ENCODE measurements at regions of chr11 and their contacts with region 1.

Region 1: GRCh38 chr11:9265211-9266131 is at the start of gene DENND5A:
- DNase-seq: peak; percentile 62
- H3K4me3 Mint-ChIP-seq: peak within 1 kb of the TSS; percentile 84
- H3K27ac Mint-ChIP-seq: peak within 1 kb of the TSS; percentile 95
- H3K4me1 Mint-ChIP-seq: peaks cover 30% of the 10 kb centered on the region
- H3K27me3 Mint-ChIP-seq: peaks cover 3% of the 10 kb centered on the region
- total RNA-seq, gene DENND5A: 62.3 to 63.5 TPM

Region 2: DNA sequence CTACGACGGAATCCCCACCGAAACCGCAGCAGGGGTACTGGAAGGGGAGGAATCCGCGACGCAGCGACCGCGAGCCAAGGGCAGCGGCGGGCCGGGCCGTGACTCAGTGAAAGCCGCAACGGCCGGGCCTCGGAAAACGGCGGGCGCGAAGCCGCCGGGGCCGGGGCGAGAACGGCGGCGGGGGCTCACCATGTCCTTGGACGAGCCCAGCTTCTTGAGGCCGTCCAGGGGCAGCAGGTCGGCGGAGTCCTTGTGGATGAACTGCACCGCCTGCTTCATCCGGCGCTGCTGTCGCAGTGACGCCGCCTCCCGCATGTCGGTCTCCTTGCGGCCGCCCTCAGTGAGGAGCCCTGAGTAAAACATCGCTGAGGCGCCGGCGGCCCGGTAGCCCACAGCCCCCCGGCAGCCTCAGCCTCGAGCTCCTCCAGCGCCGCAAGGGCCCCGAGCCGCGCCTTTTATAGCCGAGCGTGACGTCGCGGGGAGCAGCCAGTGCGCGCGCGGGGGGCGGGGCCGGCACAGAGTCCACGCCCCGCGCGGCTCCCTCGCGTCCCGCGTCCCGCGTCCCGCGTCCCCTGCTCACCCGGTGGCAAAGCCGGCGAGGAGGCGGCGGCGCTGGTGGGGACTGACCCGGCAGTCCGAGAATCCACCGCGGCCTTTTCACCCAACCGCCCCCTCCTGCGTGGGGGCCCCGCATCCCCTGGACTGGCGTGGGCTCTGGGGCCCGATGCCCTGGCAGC is 261.7 kb before region 1 on chr11 and contains the start of gene NRIP3:
- CTCF ChIA-PET with region 1: no interaction called
- intact Hi-C with region 1: loop called (anchors 1 kb)
- DNase-seq: peak; percentile 67
- H3K4me3 Mint-ChIP-seq: peak within 1 kb of the TSS; percentile 68
- H3K27ac Mint-ChIP-seq: no peak within 1 kb of the TSS
- H3K4me1 Mint-ChIP-seq: peaks cover 24% of the 10 kb centered on the region
- H3K27me3 Mint-ChIP-seq: peaks cover 33% of the 10 kb centered on the region
- total RNA-seq, gene NRIP3: 3.0 to 3.5 TPM

Region 3: GRCh38 chr11:9158898-9159391 is 106.5 kb before region 1 on chr11:
- CTCF ChIA-PET with region 1: no interaction called
- intact Hi-C with region 1: loop called (anchors 1 kb)
- DNase-seq: no peak
- H3K4me3 Mint-ChIP-seq: no peak overlapping the region
- H3K27ac Mint-ChIP-seq: peak overlapping the region; percentile 84
- H3K4me1 Mint-ChIP-seq: peaks cover 29% of the 10 kb centered on the region
- H3K27me3 Mint-ChIP-seq: no peaks in the 10 kb centered on the region

Region 4: DNA sequence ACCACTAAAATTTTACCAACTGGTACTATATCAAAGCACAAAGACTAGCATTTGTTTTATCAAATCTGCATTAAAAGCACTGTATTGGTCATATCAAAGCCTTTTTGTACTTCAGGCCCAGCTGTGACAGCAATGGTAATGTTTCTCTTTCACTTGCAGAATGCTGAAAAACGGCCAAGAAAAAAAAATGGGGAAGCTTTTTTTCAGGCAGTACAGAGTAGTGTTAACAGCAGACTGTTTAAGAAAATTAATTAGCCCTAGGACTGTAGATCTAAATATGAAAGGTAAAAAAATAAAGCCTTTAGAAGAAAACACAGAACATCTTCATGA is 33.7 kb before region 1 on chr11:
- CTCF ChIA-PET with region 1: no interaction called
- intact Hi-C with region 1: loop called (anchors 1 kb)
- DNase-seq: peak; percentile 27
- H3K4me3 Mint-ChIP-seq: peak overlapping the region; percentile 68
- H3K27ac Mint-ChIP-seq: peak overlapping the region; percentile 56
- H3K4me1 Mint-ChIP-seq: peaks cover 58% of the 10 kb centered on the region
- H3K27me3 Mint-ChIP-seq: no peaks in the 10 kb centered on the region

Region 5: DNA sequence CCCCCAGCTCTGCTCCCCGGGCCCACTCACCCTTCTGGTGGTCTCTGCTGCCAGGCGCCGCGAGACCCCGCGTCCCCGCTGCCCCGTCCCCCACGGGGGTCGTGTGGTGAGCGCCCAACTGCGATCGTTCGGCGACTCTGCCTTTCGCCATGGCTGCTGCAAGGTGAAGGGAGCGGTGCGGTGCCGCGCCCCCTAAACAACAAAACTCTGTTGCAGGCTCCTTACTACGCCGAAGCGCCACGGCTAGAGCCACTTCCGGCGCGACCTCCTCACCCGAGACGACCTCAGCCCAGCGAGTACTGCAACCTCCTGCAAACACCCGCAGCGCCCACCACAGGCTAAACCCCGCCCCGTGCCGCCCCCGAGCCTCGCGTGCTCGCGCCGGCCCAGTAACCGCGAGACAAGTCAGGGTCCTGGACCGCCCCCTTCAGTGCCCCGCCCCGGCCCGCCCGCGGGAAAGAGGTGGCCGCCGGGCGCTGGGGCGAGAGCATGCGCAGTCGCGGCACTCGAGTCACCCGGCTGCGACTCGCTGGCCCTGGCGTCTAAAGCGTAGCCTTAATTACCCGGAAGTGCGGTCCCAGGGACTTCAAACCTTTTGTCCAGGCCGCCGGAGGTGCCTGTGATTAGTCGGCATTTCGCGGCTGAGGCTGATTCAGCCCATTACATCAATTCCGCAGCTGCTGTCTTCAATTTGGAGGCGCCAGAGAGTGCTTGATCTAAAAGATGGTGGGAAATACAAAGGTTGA is 49.0 kb after region 1 on chr11 and contains the start of gene TMEM41B:
- CTCF ChIA-PET with region 1: interaction called, 5 read pairs
- intact Hi-C with region 1: loop called (anchors 1 kb)
- DNase-seq: peak; percentile 99
- H3K4me3 Mint-ChIP-seq: peak within 1 kb of the TSS; percentile 99
- H3K27ac Mint-ChIP-seq: peak within 1 kb of the TSS; percentile 92
- H3K4me1 Mint-ChIP-seq: peaks cover 37% of the 10 kb centered on the region
- H3K27me3 Mint-ChIP-seq: peaks cover 13% of the 10 kb centered on the region
- total RNA-seq, gene TMEM41B: 27.8 to 30.5 TPM

Region 6: GRCh38 chr11:9384535-9385303 is 119.2 kb after region 1 on chr11 and contains the start of gene IPO7:
- CTCF ChIA-PET with region 1: no interaction called
- intact Hi-C with region 1: loop called (anchors 1 kb)
- DNase-seq: peak; percentile 94
- H3K4me3 Mint-ChIP-seq: peak within 1 kb of the TSS; percentile 92
- H3K27ac Mint-ChIP-seq: peak within 1 kb of the TSS; percentile 83
- H3K4me1 Mint-ChIP-seq: peaks cover 36% of the 10 kb centered on the region
- H3K27me3 Mint-ChIP-seq: no peaks in the 10 kb centered on the region
- total RNA-seq, gene IPO7: 164 to 177 TPM

Region 7: DNA sequence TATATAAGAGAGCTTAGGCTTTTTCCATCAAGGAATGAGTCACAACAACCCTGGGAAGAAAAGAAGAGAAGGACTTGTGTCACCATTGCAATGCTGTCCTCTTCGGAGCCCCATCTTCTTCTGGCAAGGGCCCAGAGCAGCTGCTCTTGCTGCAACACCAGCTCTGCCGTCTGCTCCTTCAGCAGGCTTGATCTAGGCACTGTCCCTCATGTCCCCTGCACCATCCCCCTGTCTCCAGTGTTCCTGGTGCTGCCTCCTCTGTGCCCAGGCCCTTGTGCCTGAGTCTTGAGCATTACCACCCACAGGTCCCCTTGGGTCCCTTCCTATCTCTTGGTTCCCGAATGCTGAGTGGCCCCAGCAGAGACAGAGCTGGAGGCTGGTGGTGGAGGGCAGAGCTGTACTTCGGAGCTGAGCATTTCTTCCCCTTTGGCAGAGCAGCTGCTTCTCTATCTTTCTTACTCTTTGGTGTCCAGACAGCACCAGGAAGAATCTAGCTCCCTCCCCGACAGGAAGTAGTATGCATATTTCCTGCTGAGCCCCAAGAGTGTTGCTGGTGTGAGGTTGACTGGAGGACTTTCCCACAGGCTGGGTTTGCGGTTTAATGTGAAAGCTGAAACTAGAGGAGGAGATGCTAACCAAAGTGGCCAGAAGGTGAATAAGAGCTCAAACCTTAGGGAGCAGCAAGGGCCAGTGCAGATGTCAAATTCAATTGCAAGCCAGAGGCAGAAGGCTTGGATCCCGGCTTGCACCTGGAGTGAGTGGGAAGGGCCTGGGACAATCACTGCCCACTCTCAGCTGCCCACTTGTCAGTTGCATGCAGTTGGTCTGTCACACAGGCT is 335.8 kb after region 1 on chr11:
- CTCF ChIA-PET with region 1: no interaction called
- intact Hi-C with region 1: loop called (anchors 1 kb)
- DNase-seq: peak; percentile 90
- H3K4me3 Mint-ChIP-seq: peak overlapping the region; percentile 67
- H3K27ac Mint-ChIP-seq: peak overlapping the region; percentile 84
- H3K4me1 Mint-ChIP-seq: peaks cover 27% of the 10 kb centered on the region
- H3K27me3 Mint-ChIP-seq: peaks cover 2% of the 10 kb centered on the region

Measured in activated naive CD4-positive, alpha-beta T cell treated with anti-CD3 and anti-CD28 coated beads for 36 hours (primary cell).